Panc1 (cell line): ENCODE measurements at regions of chr17 and their contacts with region 1.

Region 1: GRCh38 chr17:39209317-39210092 is 9.4 kb downstream of the RPL19 start:
- DNase-seq: no peak
- ATAC-seq: no peak
- H3K4me3 ChIP-seq: peak overlapping the region in 1 of 2 experiments; percentile 1; a peak in 1 of 4 replicates
- H3K27ac ChIP-seq: no peak overlapping the region
- H3K4me1 ChIP-seq: peaks cover 5% of the 10 kb centered on the region; the same call in 1 of the 2 replicates
- H3K27me3 ChIP-seq: no peaks in the 10 kb centered on the region
- CTCF ChIP-seq: no peak

Region 2: DNA sequence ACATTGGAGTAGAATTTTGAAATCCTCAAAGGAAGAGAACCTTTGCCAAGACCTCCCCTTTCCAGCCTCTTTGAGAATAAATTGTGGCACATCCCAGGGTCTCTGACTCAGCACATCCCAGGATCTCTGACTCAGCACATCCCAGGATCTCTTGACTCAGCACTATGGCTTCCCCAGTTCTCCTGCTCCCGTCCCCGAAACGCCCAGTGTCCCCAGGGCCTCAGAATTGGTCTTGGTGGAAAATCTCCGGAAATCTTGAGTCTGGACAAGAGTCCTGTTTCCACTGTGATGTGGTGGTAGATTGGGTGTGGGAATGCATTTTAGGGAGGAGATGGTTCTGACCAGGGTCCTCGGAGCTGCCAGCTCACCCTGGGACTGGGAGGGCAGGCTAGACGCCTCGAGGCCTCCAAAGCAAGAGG is 77.3 kb before region 1 on chr17:
- CTCF ChIA-PET with region 1: interaction called, 14 read pairs
- POLR2A ChIA-PET with region 1: no interaction called
- in situ Hi-C with region 1: no loop called
- intact Hi-C with region 1: no loop called
- DNase-seq: no peak
- ATAC-seq: no peak
- H3K4me3 ChIP-seq: no peak overlapping the region
- H3K27ac ChIP-seq: no peak overlapping the region
- H3K4me1 ChIP-seq: no peaks in the 10 kb centered on the region
- H3K27me3 ChIP-seq: no peaks in the 10 kb centered on the region
- CTCF ChIP-seq: no peak

Region 3: DNA sequence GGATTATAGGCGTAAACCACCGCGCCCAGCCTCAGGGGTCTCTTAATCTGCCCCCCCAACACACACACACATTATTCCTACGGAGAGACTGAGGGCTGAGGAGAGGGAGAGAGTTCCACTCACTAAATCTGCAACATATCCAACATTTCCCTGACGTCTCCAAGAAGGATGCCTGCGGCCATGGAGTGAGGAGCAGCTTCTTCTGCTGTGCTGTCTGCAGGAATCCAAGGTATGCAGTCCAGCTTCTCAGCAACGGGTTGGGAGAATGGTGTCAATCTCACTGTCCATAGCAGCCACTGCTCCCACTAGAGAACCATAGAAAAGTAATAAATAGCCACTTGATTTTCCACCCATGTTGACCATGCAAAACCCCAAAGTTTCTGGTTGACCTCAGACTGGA is 53.0 kb before region 1 on chr17:
- CTCF ChIA-PET with region 1: no interaction called
- POLR2A ChIA-PET with region 1: no interaction called
- in situ Hi-C with region 1: no loop called
- intact Hi-C with region 1: no loop called
- DNase-seq: no peak
- ATAC-seq: no peak
- H3K4me3 ChIP-seq: no peak overlapping the region
- H3K27ac ChIP-seq: no peak overlapping the region
- H3K4me1 ChIP-seq: peaks cover 5% of the 10 kb centered on the region; the same call in 1 of the 2 replicates
- H3K27me3 ChIP-seq: no peaks in the 10 kb centered on the region
- CTCF ChIP-seq: no peak